ENCODE measurements at regions of chr2 and their contacts with region 1.

Region 1: GRCh38 chr2:201860636-201861066 is 54.3 kb downstream of the CDK15 start:
- DNase-seq: peak; percentile 69 to 84 (median 82)
- H3K4me3 ChIP-seq: no peak overlapping the region
- H3K27ac ChIP-seq: no peak overlapping the region
- H3K4me1 ChIP-seq: peaks cover 0 to 15% (median 9%) of the 10 kb centered on the region in 4 experiments
- H3K27me3 ChIP-seq: peaks cover 0 to 22% (median 9%) of the 10 kb centered on the region in 5 experiments

Region 2: DNA sequence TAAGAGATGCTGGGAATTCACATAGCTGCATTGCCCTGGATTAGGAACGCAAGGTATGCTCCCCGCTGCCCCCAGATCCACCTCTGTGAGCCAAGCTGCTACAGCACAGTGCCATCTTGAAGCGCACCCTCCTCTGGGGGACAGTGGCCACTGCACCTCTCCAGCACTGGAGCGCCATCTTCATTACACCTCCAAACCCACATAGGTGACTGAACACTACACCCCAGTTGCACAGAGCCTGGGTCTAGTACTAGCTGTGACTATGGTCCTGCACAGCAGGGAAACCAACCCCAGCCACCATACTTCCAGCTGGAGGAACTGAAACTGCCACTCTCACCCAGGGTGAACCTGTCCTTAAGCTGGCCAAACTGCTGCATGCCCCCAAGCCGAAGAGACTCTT is 302.0 kb before region 1 on chr2:
- CTCF ChIA-PET with region 1: no interaction called
- POLR2A ChIA-PET with region 1: no interaction called
- DNase-seq: no peak
- H3K4me3 ChIP-seq: no peak overlapping the region
- H3K27ac ChIP-seq: no peak overlapping the region
- H3K4me1 ChIP-seq: no peaks in the 10 kb centered on the region
- H3K27me3 ChIP-seq: no peaks in the 10 kb centered on the region

Region 3: DNA sequence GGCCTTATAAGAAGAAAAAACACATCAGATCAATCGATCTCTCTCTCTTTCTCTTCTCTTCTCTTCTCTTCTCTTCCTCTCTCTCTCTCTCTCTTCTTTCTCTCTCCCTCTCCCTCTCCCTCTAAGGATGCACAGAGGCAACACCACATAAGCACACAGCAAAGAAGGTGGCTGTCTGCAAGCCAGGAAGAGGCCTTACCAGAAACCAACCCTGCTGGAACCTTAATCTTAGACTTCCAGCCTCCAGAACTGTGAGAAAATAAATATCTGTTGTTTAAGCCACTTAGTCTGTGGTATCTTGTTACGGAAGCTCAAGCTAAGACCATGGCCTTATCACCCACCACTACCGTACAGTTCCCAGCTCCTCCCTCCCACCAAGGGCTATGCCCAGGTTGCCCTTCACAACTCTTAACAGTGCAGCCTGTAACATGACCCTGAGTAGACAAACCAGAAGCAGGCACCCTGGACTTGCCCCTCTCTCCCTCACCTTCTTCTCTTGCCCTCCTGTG is 192.2 kb before region 1 on chr2:
- CTCF ChIA-PET with region 1: no interaction called
- POLR2A ChIA-PET with region 1: no interaction called
- DNase-seq: peak in 1 of 3 donors; percentile 15
- H3K4me3 ChIP-seq: no peak overlapping the region
- H3K27ac ChIP-seq: no peak overlapping the region
- H3K4me1 ChIP-seq: no peaks in the 10 kb centered on the region
- H3K27me3 ChIP-seq: no peaks in the 10 kb centered on the region

Region 4: DNA sequence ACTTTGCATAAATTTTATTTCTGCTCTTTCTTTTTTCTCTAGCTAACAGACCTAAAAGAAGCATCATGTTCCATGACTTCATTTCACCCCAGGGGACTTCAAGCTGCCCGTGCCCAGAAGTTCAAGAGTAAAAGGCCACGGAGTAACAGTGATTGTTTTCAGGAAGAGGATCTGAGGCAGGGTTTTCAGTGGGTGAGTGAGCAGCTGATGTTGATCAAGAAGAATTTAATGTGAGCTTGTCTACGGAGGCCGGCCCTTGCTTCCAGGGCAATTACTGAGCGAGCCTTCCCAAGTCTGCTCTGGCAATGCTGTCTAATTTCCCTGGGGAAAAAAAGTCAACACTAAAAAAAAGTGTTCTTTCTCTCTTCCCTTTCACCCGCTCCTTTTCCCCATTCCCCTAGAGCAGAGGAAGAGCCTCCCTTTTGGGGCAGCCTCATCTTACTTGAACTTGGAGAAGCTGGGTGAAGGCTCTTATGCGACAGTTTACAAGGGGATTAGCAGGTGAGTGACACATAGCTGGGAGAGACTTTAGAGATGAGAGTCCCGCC is 53.1 kb before region 1 on chr2:
- CTCF ChIA-PET with region 1: no interaction called
- POLR2A ChIA-PET with region 1: no interaction called
- DNase-seq: no peak
- H3K4me3 ChIP-seq: no peak overlapping the region
- H3K27ac ChIP-seq: no peak overlapping the region
- H3K4me1 ChIP-seq: no peaks in the 10 kb centered on the region
- H3K27me3 ChIP-seq: no peaks in the 10 kb centered on the region

Region 5: GRCh38 chr2:201871471-201871870 is 10.8 kb after region 1 on chr2:
- CTCF ChIA-PET with region 1: interaction called, 11 read pairs
- POLR2A ChIA-PET with region 1: no interaction called
- DNase-seq: no peak
- H3K4me3 ChIP-seq: no peak overlapping the region
- H3K27ac ChIP-seq: no peak overlapping the region
- H3K4me1 ChIP-seq: peaks cover 0 to 6% (median 0%) of the 10 kb centered on the region in 4 experiments
- H3K27me3 ChIP-seq: peaks cover 0 to under 1% (median 0%) of the 10 kb centered on the region in 5 experiments

Region 6: GRCh38 chr2:202056392-202057010 is 195.8 kb after region 1 on chr2:
- CTCF ChIA-PET with region 1: interaction called, 10 read pairs
- POLR2A ChIA-PET with region 1: no interaction called
- DNase-seq: peak; percentile 37 to 66 (median 66)
- H3K4me3 ChIP-seq: no peak overlapping the region
- H3K27ac ChIP-seq: no peak overlapping the region
- H3K4me1 ChIP-seq: peaks cover 0 to 4% (median 2%) of the 10 kb centered on the region in 4 experiments
- H3K27me3 ChIP-seq: no peaks in the 10 kb centered on the region

Region 7: GRCh38 chr2:202178342-202178958 is 317.8 kb after region 1 on chr2:
- CTCF ChIA-PET with region 1: interaction called, 23 read pairs
- POLR2A ChIA-PET with region 1: no interaction called
- DNase-seq: peak; percentile 63 to 76 (median 69)
- H3K4me3 ChIP-seq: no peak overlapping the region
- H3K27ac ChIP-seq: no peak overlapping the region
- H3K4me1 ChIP-seq: no peaks in the 10 kb centered on the region
- H3K27me3 ChIP-seq: peaks cover 0 to 2% (median 0%) of the 10 kb centered on the region in 5 experiments